ENCODE measurements at regions of chr1 and their contacts with region 1.

Region 1: GRCh38 chr1:56831871-56832693 is 12.9 kb upstream of the FYB2 start:
- DNase-seq: peak in 1 of 2 donors; percentile 75
- H3K4me3 ChIP-seq: peak overlapping the region in 1 of 2 donors; percentile 22
- H3K27ac ChIP-seq: no peak overlapping the region
- H3K4me1 ChIP-seq: no peaks in the 10 kb centered on the region
- H3K27me3 ChIP-seq: no peaks in the 10 kb centered on the region
- CTCF ChIP-seq: peak; percentile 59 to 97 (median 92)

Region 2: DNA sequence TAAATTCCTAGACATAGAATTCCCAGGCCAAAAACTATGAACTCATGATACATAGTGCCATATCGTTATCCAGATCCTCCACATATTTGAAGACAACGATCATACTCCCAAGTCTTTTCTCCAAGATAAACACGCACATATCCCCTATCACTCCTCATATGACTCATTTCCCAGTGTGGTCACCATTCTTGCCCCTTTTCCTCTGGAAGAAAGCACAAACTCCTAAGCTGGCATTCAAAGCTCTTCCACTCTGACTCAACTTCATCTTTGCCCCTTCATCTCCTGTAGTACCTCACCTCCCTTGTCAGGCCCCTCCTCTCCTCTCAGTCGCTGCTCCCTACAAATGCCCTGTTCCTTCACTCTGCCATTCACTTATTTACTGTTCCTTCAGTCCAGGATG is 530.2 kb before region 1 on chr1:
- intact Hi-C with region 1: no loop called
- DNase-seq: no peak
- H3K4me3 ChIP-seq: no peak overlapping the region
- H3K27ac ChIP-seq: no peak overlapping the region
- H3K4me1 ChIP-seq: no peaks in the 10 kb centered on the region
- H3K27me3 ChIP-seq: no peaks in the 10 kb centered on the region
- CTCF ChIP-seq: no peak

Region 3: GRCh38 chr1:58162952-58163550 is 1331.0 kb after region 1 on chr1:
- intact Hi-C with region 1: loop called (anchors 10 kb)
- DNase-seq: no peak
- H3K4me3 ChIP-seq: no peak overlapping the region
- H3K27ac ChIP-seq: no peak overlapping the region
- H3K4me1 ChIP-seq: no peaks in the 10 kb centered on the region
- H3K27me3 ChIP-seq: no peaks in the 10 kb centered on the region
- CTCF ChIP-seq: peak; percentile 23 to 64 (median 51)

Measured in ascending aorta (tissue), 2 donors.